Panc1 (cell line): ENCODE measurements at regions of chr1 and their contacts with region 1.

Region 1: DNA sequence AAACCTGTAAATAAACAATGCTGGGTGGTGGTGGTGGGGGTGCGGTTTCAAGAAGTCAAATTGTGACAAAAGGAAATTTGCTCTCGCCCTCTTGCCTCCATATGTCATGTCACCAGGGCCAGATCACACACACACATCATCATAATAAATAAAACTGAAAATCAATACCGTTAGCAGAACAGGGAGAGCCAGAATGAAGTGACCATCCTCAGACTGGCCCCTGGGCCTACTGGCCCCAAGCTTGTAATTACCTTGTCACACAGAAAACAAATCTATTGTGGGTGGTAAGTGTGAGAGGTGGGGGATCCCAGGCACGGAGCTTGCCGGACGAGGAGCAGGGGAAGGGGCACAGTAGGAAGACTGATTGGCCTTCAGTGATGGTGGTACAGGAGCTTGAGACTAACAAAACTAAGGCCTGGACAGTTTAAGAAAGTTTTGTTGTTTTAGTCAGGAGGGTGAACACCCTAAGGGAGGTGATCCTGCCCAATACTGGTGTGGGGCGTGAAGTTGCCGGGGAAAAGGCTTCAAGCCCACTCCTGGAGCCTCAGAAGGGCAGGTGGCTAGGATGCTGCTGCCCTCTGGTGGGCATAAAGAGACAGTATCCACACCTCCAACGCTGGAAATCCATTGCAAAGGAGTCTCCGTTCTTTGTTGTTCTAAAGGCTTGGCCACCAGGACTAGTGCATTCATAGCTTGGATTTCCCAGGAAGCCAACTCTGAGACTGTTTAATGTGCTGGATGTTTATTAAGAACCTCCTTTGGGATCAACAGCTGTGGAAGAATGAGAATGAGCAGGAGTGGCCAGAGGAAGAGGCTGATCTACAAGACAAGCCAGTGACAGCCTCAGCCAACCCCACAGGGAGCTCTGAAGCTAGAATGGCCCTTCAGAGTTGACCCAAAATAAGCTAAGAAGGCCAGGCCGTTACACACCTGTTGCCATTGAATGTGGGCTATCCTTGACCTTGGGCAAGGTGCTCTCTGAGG is 8.1 kb upstream of the C1orf216 start:
- DNase-seq: no peak
- ATAC-seq: peak; percentile 96
- H3K4me3 ChIP-seq: no peak overlapping the region
- H3K27ac ChIP-seq: no peak overlapping the region
- H3K4me1 ChIP-seq: no peaks in the 10 kb centered on the region
- H3K27me3 ChIP-seq: no peaks in the 10 kb centered on the region
- CTCF ChIP-seq: peak; percentile 93

Region 2: GRCh38 chr1:35406103-35406502 is 320.6 kb before region 1 on chr1:
- CTCF ChIA-PET with region 1: no interaction called
- POLR2A ChIA-PET with region 1: no interaction called
- in situ Hi-C with region 1: no loop called
- intact Hi-C with region 1: no loop called
- DNase-seq: no peak
- ATAC-seq: no peak
- H3K4me3 ChIP-seq: no peak overlapping the region
- H3K27ac ChIP-seq: no peak overlapping the region
- H3K4me1 ChIP-seq: no peaks in the 10 kb centered on the region
- H3K27me3 ChIP-seq: no peaks in the 10 kb centered on the region
- CTCF ChIP-seq: no peak

Region 3: DNA sequence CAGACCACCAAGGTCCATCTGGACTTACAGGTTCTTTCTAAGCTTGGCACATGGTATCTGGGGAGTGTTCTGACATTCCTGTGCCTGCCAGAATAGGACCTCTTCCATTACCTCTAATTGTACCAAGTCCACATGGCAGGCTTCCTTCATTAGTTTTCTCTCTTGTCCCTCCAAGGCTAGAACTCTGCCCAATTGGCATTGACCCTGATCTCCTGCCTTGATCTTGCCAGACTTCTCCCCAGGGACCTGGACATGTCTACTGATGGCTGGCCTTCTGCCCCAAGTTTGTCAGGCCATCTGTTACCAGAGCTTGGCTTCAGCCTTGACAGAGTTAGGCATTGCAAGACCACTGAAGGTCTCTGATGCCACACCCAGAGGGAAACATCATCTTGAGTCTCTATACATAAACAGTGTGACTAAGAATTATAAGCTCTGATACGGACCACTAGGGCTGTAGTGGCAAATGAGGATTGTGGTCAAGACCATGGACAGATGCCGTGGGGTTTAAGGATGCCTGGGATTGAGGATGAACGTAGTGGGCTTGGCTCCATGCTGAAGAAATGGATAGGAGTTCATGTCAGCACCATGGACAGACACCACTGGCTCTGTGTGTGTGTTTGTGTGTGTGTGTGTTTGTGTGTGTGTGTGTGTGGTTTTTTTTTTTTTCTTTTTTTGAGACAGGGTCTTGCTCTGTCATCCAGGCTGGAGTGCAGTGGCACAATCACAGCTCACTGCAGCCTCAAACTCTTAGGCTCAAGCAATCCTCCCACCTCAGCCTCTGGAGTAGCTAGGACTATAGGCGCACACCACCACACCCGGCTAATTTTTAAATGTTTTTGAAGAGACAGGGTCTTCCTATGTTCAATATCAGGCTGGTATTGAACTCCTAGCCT is 65.9 kb before region 1 on chr1:
- CTCF ChIA-PET with region 1: interaction called, 13 read pairs
- POLR2A ChIA-PET with region 1: no interaction called
- in situ Hi-C with region 1: no loop called
- intact Hi-C with region 1: no loop called
- DNase-seq: no peak
- ATAC-seq: no peak
- H3K4me3 ChIP-seq: no peak overlapping the region
- H3K27ac ChIP-seq: no peak overlapping the region
- H3K4me1 ChIP-seq: no peaks in the 10 kb centered on the region
- H3K27me3 ChIP-seq: no peaks in the 10 kb centered on the region; the same call in 1 of the 2 replicates
- CTCF ChIP-seq: no peak